Panc1 (cell line): ENCODE measurements at regions of chr4 and their contacts with region 1.

Region 1: DNA sequence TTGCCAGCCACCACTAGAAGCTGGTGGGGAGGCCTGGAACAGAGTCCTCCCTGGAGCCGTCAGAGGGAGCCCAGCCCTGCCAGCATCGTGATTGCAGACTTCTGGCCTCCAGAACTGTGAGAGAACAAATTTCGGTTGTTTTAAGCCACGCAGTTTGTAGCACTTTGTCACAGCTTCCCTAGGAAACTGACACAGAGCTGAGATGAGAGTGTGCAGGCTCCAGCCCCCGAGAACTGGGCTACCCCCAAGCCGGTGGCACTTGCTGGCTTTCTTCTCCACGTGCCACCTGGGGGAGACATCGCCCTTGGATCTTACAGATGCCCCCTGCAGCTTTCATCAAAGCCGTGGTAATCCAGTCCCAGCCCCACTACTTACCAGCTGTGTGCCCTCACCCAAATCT is 83.7 kb downstream of the PPP2R2C start:
- DNase-seq: no peak
- ATAC-seq: no peak
- H3K4me3 ChIP-seq: no peak overlapping the region
- H3K27ac ChIP-seq: no peak overlapping the region
- H3K4me1 ChIP-seq: peaks cover 10% of the 10 kb centered on the region
- H3K27me3 ChIP-seq: no peaks in the 10 kb centered on the region
- CTCF ChIP-seq: no peak; the same call in 1 of the 2 replicates

Region 2: GRCh38 chr4:5956285-5957021 is 432.3 kb before region 1 on chr4:
- CTCF ChIA-PET with region 1: no interaction called
- POLR2A ChIA-PET with region 1: no interaction called
- in situ Hi-C with region 1: no loop called
- intact Hi-C with region 1: no loop called
- DNase-seq: no peak
- ATAC-seq: peak; percentile 45; the same call in 1 of the 2 replicates
- H3K4me3 ChIP-seq: no peak overlapping the region
- H3K27ac ChIP-seq: no peak overlapping the region
- H3K4me1 ChIP-seq: no peaks in the 10 kb centered on the region; the same call in 1 of the 2 replicates
- H3K27me3 ChIP-seq: no peaks in the 10 kb centered on the region; the same call in 1 of the 2 replicates
- CTCF ChIP-seq: no peak

Region 3: DNA sequence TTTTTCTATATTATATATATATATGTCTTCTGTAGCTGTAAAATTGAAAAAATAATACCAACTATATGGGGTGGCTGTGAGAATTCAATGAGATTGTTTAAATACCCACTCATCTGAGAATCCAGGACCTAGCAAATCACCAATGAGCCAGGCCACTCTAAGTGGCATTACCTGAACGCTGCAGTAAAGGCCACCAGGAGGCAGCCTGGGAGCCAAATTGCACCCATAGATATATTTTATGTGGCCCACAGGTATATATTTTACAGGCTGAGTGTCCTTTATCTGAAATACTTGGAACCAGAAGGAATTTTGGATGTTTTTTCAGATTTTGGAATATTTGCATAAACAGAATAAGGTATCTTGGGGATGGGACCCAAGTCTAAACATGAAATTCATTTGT is 312.3 kb before region 1 on chr4:
- CTCF ChIA-PET with region 1: no interaction called
- POLR2A ChIA-PET with region 1: no interaction called
- in situ Hi-C with region 1: no loop called
- intact Hi-C with region 1: no loop called
- DNase-seq: no peak
- ATAC-seq: no peak
- H3K4me3 ChIP-seq: no peak overlapping the region
- H3K27ac ChIP-seq: no peak overlapping the region
- H3K4me1 ChIP-seq: no peaks in the 10 kb centered on the region
- H3K27me3 ChIP-seq: no peaks in the 10 kb centered on the region; the same call in 1 of the 2 replicates
- CTCF ChIP-seq: 0 out of 2 replicates have a peak, but pooled peaks have one; percentile 35

Region 4: GRCh38 chr4:6095023-6095752 is 293.5 kb before region 1 on chr4:
- CTCF ChIA-PET with region 1: no interaction called
- POLR2A ChIA-PET with region 1: no interaction called
- in situ Hi-C with region 1: no loop called
- intact Hi-C with region 1: no loop called
- DNase-seq: peak; percentile 59
- ATAC-seq: peak; percentile 65; the same call in 1 of the 2 replicates
- H3K4me3 ChIP-seq: no peak overlapping the region
- H3K27ac ChIP-seq: no peak overlapping the region
- H3K4me1 ChIP-seq: no peaks in the 10 kb centered on the region
- H3K27me3 ChIP-seq: peaks cover 3% of the 10 kb centered on the region; the same call in 1 of the 2 replicates
- CTCF ChIP-seq: no peak

Region 5: GRCh38 chr4:6546681-6547447 is 158.2 kb after region 1 on chr4:
- CTCF ChIA-PET with region 1: interaction called, 12 read pairs
- POLR2A ChIA-PET with region 1: no interaction called
- in situ Hi-C with region 1: no loop called
- intact Hi-C with region 1: no loop called
- DNase-seq: no peak
- ATAC-seq: 0 out of 2 replicates have a peak, but pooled peaks have one; percentile 71
- H3K4me3 ChIP-seq: no peak overlapping the region
- H3K27ac ChIP-seq: no peak overlapping the region
- H3K4me1 ChIP-seq: no peaks in the 10 kb centered on the region
- H3K27me3 ChIP-seq: no peaks in the 10 kb centered on the region
- CTCF ChIP-seq: peak; percentile 86